ENCODE measurements at regions of chr14 and their contacts with region 1.

Region 1: DNA sequence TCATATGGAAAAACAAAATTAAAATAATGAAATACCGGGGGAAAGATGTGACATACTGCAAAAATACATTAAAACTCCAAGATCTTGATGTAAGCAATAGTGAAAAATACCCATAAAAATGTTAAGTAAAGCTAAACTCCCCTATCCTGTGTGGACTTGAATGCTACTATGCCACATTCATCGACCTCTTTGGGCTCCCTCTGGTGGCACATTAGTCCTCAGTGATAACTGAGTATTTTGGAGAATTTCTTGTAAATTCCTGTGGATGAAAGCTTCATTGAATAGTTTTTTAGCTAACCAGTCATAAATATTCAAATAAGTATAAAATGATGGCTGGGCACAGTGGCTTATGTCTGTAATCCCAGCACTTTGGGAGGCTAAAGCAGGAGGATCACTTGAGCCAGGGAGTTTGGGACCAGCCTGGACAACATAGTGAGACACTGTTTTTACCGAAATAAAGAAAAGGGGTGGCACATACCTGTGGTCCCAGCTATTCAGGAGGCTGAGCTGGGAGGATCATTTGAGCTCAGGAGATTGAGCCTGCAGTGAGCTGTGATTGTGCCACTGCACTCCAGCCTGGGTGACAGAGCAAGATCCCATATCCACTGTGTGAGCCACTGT is 42.4 kb upstream of the SGPP1 start:
- DNase-seq: peak; percentile 74
- ATAC-seq: peak; percentile 79
- H3K4me3 Mint-ChIP-seq: no peak overlapping the region
- H3K27ac Mint-ChIP-seq: no peak overlapping the region
- H3K4me1 Mint-ChIP-seq: peaks cover 2% of the 10 kb centered on the region
- H3K27me3 Mint-ChIP-seq: no peaks in the 10 kb centered on the region
- CTCF ChIP-seq: peak; percentile 58

Region 2: GRCh38 chr14:63388763-63389431 is 381.4 kb before region 1 on chr14:
- CTCF ChIA-PET with region 1: interaction called, 7 read pairs
- POLR2A ChIA-PET with region 1: interaction called, 4 read pairs
- intact Hi-C with region 1: loop called (anchors 5 kb)
- DNase-seq: peak; percentile 74
- ATAC-seq: peak; percentile 92
- H3K4me3 Mint-ChIP-seq: no peak overlapping the region
- H3K27ac Mint-ChIP-seq: no peak overlapping the region
- H3K4me1 Mint-ChIP-seq: peaks cover 4% of the 10 kb centered on the region
- H3K27me3 Mint-ChIP-seq: no peaks in the 10 kb centered on the region
- CTCF ChIP-seq: peak; percentile 81

Region 3: DNA sequence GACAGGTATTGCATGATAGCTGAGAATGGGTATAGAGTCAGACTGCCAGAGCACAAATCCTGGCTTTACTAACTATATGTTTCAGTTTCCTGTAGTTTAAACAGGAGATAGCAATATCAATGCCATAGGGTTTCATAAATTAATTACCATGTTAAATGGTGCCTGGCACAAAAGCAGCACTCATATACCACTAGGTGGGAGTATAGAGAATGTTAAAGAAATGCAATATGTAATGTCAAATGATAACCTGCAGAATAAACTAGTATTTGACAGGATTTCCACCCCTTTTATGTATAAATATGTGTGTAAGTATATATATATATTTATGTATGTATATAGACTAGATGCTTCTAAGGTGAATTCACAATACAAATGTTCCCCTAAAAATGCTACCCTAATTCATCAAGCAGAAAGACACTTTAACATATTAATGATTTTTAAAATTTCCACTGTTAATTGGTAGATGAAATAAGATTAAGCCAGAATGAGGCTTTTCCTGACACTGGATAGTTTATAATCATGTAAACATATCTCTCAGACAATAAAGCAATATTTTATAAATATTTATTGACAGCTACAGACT is 137.3 kb before region 1 on chr14:
- CTCF ChIA-PET with region 1: interaction called, 28 read pairs
- POLR2A ChIA-PET with region 1: no interaction called
- intact Hi-C with region 1: no loop called
- DNase-seq: no peak
- ATAC-seq: peak; percentile 80
- H3K4me3 Mint-ChIP-seq: no peak overlapping the region
- H3K27ac Mint-ChIP-seq: no peak overlapping the region
- H3K4me1 Mint-ChIP-seq: peaks cover 48% of the 10 kb centered on the region
- H3K27me3 Mint-ChIP-seq: no peaks in the 10 kb centered on the region
- CTCF ChIP-seq: peak; percentile 50

Region 4: GRCh38 chr14:63641473-63642228 is 128.6 kb before region 1 on chr14 and contains the start of gene WDR89:
- CTCF ChIA-PET with region 1: interaction called, 14 read pairs
- POLR2A ChIA-PET with region 1: interaction called, 3 read pairs
- intact Hi-C with region 1: no loop called
- DNase-seq: peak; percentile 98
- ATAC-seq: peak; percentile 88
- H3K4me3 Mint-ChIP-seq: peak within 1 kb of the TSS; percentile 98
- H3K27ac Mint-ChIP-seq: peak within 1 kb of the TSS; percentile 100
- H3K4me1 Mint-ChIP-seq: peaks cover 36% of the 10 kb centered on the region
- H3K27me3 Mint-ChIP-seq: no peaks in the 10 kb centered on the region
- CTCF ChIP-seq: peak; percentile 89
- total RNA-seq, gene WDR89: 30.9 to 33.4 TPM

Region 5: DNA sequence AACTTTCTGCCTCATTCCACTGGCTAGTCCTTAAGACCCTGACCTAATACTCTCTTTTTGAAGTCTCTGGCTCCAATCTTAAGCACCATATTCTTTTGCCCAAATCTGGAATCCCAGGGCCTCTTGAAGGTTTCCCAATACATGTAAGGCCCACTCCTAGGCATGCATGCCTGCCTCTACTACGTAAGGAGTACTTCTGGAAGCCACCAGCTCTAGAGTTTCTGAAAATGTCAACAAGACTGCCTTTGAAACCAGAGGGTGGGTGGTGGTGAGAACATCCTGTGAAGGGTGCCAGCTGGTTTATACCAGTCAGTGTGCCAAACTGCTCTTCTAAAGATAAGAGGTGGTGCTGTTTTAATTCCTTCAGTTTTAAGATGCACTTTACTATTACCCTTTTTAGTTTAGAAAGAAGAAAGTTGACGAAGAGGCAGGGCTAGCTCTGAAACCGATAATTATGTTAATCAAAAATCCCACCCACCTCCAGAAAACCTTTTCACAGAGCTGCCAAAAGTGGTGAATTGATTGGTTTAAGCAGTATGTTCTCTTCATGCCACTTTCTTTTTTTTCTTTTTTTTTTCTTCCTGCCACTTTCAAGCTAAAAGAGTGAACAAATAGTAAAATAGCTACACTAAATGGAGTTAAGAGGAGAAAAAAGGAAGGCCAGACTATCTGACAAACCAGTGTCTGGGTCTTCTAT is 119.9 kb before region 1 on chr14:
- CTCF ChIA-PET with region 1: interaction called, 17 read pairs
- POLR2A ChIA-PET with region 1: no interaction called
- intact Hi-C with region 1: no loop called
- DNase-seq: peak; percentile 81
- ATAC-seq: peak; percentile 95
- H3K4me3 Mint-ChIP-seq: peak overlapping the region; percentile 59
- H3K27ac Mint-ChIP-seq: peak overlapping the region; percentile 94
- H3K4me1 Mint-ChIP-seq: peaks cover 28% of the 10 kb centered on the region
- H3K27me3 Mint-ChIP-seq: no peaks in the 10 kb centered on the region
- CTCF ChIP-seq: no peak

Region 6: DNA sequence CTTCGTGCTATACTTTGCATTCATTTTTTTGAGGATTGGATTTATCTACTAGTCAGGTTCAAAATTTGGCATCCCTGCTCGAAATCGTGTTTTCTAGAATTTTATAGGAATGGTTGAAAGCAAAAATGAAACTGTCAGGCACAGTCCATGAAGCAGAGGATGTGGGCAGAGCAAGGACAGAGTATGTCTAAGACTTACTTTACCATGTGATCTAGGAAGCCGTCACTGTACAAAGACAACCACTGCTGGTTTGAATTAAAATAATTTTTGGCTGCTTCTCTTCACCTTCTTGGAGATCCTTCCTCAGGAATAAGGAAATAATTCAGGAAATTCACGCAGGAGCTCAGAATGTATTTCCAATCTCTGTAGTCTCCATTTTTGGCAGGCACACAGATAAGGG is 10.8 kb before region 1 on chr14:
- CTCF ChIA-PET with region 1: interaction called, 12 read pairs
- POLR2A ChIA-PET with region 1: interaction called, 3 read pairs
- intact Hi-C with region 1: no loop called
- DNase-seq: peak; percentile 24
- ATAC-seq: peak; percentile 88
- H3K4me3 Mint-ChIP-seq: peak overlapping the region; percentile 60
- H3K27ac Mint-ChIP-seq: peak overlapping the region; percentile 85
- H3K4me1 Mint-ChIP-seq: peaks cover 9% of the 10 kb centered on the region
- H3K27me3 Mint-ChIP-seq: no peaks in the 10 kb centered on the region
- CTCF ChIP-seq: no peak

Region 7: DNA sequence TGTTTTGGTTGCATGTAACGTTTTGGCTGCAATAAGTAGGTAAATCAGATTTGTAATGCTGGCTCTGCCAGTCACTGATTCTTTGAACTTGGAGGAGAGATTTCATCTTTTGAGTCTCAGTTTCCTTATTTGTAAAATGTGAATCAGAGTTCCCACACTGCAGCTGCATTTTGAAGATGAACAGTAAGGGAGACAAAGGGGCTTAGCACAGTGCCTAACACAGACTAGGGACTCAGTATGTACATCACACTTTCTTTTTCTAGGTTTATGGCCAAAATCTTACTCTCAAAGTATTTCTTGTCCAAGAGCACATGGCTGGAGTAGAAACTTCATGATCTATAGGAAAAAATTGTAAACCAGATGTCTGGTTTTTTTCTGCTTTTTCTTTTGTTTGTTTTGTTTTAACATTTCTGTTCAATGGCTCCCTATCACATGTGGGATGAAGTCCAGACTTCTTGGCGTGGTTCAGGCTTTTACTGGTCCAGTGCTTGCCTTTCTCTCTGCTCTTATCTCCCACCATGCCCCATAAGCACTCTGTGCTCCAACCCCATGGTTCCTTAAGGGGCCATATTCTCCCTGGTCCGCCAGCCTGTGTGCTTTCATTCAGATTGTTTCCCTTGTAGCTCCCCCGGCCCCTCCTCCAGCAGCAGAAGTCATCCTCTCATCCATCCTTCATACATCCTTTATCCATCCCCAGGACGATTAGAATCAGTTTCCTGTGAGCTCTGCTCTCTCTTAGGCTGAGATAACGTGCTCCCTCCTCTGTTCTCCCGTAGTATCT is 140.5 kb after region 1 on chr14:
- CTCF ChIA-PET with region 1: no interaction called
- POLR2A ChIA-PET with region 1: no interaction called
- intact Hi-C with region 1: no loop called
- DNase-seq: peak; percentile 22
- ATAC-seq: peak; percentile 87
- H3K4me3 Mint-ChIP-seq: no peak overlapping the region
- H3K27ac Mint-ChIP-seq: peak overlapping the region; percentile 71
- H3K4me1 Mint-ChIP-seq: peaks cover 38% of the 10 kb centered on the region
- H3K27me3 Mint-ChIP-seq: no peaks in the 10 kb centered on the region
- CTCF ChIP-seq: no peak